Activated T-helper 2 cell treated with anti-CD3 and anti-CD28 coated beads, Interferon-gamma antibody, Interleukin-2, Interleukin-4, amounts not matched to agents 10 μg/mL and 5 μg/mL and 100 μg/mL, durations not matched to agents 14 hours and 24 hours and 36 hours (primary cell): ENCODE measurements at regions of chr4 and their contacts with region 1.

Region 1: DNA sequence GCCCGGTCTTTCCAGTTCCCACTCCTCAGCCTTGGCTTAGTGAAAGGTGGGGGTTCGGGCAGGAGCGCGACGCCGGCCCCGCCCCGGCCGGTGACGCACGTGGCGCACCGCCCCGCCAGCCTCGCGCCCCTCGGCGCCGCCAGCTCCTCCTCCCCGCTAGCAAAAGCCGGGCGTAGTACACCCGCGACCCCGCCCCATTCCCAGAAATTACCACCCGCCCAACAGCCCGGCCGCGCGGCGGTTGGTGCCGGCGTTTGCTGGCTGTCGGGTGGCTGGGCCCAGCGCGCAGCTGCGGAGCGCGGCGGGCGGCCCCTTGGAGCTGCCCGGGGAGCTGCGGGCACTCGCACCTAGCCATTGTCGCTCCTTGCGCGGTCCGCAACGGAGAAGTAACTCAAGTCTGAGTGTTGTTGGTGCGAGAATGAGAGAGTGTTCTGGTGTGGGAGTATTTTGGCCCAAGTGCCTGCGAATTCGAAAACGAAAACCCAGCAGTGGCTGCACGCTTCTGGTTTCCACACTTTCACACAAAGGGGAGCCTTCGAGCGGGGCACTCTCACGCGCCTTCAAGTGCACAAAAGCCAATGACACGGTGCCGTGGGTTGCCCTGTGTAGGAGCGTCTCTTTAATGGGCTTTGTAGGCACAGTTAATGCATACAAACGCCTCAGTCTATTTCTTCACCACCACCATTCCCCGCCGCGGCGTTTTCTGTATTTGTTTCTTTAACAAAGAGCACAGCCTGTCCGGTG is 1.0 kb upstream of the ELF2 start:
- DNase-seq: peak; percentile 98
- H3K4me3 Mint-ChIP-seq: peak overlapping the region; percentile 90
- H3K27ac Mint-ChIP-seq: peak overlapping the region; percentile 93
- H3K4me1 Mint-ChIP-seq: peaks cover 24% of the 10 kb centered on the region
- H3K27me3 Mint-ChIP-seq: peaks cover 33% of the 10 kb centered on the region

Region 2: DNA sequence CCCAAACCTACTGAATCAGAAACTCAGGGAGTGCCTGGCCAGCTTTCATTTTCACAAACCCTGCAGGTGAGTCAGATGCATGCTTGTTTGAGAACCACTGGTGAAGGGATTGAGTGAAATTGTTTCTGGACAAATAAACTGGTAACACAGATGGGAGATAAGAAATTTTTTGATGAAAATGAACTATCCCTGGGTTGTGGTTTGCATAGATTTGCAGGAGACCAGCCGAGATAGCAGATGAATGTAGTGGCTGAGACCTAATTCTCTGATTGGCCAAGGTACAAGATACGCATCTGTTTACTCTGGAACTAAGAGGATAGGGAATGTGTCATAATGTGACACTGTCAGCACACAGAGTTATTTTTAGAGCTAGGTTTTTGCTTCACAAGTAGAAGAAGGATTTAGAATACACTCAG is 280.2 kb before region 1 on chr4:
- intact Hi-C with region 1: no loop called
- DNase-seq: no peak
- H3K4me3 Mint-ChIP-seq: no peak overlapping the region
- H3K27ac Mint-ChIP-seq: no peak overlapping the region
- H3K4me1 Mint-ChIP-seq: peaks cover 8% of the 10 kb centered on the region
- H3K27me3 Mint-ChIP-seq: peaks cover 14% of the 10 kb centered on the region

Region 3: GRCh38 chr4:139015269-139015947 is 162.6 kb before region 1 on chr4 and contains the start of gene NOCT:
- intact Hi-C with region 1: loop called (anchors 1 kb)
- DNase-seq: peak; percentile 89
- H3K4me3 Mint-ChIP-seq: peak within 1 kb of the TSS; percentile 89
- H3K27ac Mint-ChIP-seq: peak within 1 kb of the TSS; percentile 93
- H3K4me1 Mint-ChIP-seq: peaks cover 41% of the 10 kb centered on the region
- H3K27me3 Mint-ChIP-seq: no peaks in the 10 kb centered on the region
- total RNA-seq, gene NOCT: 20.3 and 22.1 TPM in 2 replicates

Region 4: GRCh38 chr4:139099366-139099982 is 78.6 kb before region 1 on chr4:
- intact Hi-C with region 1: loop called (anchors 2 kb)
- DNase-seq: peak; percentile 51
- H3K4me3 Mint-ChIP-seq: no peak overlapping the region
- H3K27ac Mint-ChIP-seq: no peak overlapping the region
- H3K4me1 Mint-ChIP-seq: no peaks in the 10 kb centered on the region
- H3K27me3 Mint-ChIP-seq: no peaks in the 10 kb centered on the region

Region 5: GRCh38 chr4:139295206-139295941 is 117.3 kb after region 1 on chr4:
- intact Hi-C with region 1: loop called (anchors 1 kb)
- DNase-seq: peak; percentile 91
- H3K4me3 Mint-ChIP-seq: peak overlapping the region; percentile 96
- H3K27ac Mint-ChIP-seq: peak overlapping the region; percentile 96
- H3K4me1 Mint-ChIP-seq: peaks cover 28% of the 10 kb centered on the region
- H3K27me3 Mint-ChIP-seq: no peaks in the 10 kb centered on the region

Region 6: GRCh38 chr4:139554893-139555704 is 377.1 kb after region 1 on chr4:
- intact Hi-C with region 1: loop called (anchors 1 kb)
- DNase-seq: peak; percentile 82
- H3K4me3 Mint-ChIP-seq: peak overlapping the region; percentile 97
- H3K27ac Mint-ChIP-seq: peak overlapping the region; percentile 98
- H3K4me1 Mint-ChIP-seq: peaks cover 47% of the 10 kb centered on the region
- H3K27me3 Mint-ChIP-seq: peaks cover 4% of the 10 kb centered on the region